PC-9 (cell line): ENCODE measurements at regions of chr5 and their contacts with region 1.

Region 1: DNA sequence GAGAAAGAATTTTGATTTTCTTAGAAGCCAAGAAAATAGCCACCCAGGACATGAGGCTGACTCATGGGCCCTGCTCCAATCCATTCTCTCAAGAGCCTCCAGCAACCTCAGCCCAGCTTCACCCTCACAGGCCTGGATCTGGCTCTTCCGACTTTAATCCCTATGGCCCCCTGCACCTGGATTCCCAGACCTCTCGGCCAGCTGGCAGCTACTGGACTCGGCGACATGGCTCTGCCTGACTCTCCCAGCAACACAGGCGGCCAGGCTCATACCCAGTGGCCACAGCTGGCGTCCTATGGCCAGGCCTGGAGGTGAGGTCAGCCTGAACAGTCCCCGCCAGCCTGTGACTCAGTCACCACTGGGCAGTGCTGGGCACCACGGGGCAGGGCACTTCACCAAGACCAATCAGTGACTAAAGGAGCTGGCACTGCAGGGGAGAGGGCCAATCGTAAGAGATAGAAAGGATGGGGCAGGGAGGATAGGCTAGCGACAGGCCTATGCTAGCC is 6.2 kb upstream of the PDLIM4 start:
- DNase-seq: no peak
- H3K4me3 ChIP-seq: no peak overlapping the region
- H3K27ac ChIP-seq: no peak overlapping the region
- H3K4me1 ChIP-seq: peaks cover 12% of the 10 kb centered on the region
- H3K27me3 ChIP-seq: no peaks in the 10 kb centered on the region
- CTCF ChIP-seq: no peak

Region 2: DNA sequence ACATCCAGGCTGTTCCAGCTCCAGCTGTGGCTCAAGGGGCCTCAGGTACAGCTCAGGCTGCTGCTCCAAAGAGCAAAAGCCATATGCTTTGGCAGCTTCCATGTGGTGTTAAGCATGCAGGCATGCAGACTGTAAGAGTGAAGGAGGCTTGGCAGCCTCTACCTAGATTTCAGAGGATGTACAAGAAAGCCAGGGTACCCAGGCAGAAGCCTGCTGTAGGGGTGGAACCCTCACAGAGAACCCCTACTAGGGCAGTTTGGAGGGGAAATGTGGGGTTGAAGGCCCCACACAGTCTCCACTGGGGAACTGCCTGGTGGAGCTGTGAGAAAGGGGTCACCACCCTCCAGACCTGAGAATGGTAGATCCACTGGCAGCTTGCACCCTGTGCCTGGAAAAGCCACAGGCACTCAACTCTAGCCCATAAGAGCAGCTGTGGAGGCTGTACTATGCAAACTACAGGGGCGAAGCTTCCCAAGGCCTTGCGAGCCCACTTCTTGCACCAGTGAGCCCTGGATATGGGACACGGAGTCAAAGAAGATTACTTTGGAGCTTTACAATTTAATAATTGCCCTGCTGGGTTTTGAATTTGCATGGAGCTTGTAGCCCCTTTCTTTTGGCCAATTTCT is 104.0 kb after region 1 on chr5:
- CTCF ChIA-PET with region 1: no interaction called
- POLR2A ChIA-PET with region 1: interaction called, 10 read pairs
- intact Hi-C with region 1: no loop called
- DNase-seq: no peak
- H3K4me3 ChIP-seq: no peak overlapping the region
- H3K27ac ChIP-seq: no peak overlapping the region
- H3K4me1 ChIP-seq: peaks cover 8% of the 10 kb centered on the region; the same call in 1 of the 2 replicates
- H3K27me3 ChIP-seq: no peaks in the 10 kb centered on the region
- CTCF ChIP-seq: no peak